Mammary epithelial cell (primary cell): ENCODE measurements at regions of chr19 and their contacts with region 1.

Region 1: GRCh38 chr19:1794424-1795172 is 17.5 kb downstream of the ATP8B3 start:
- DNase-seq: no peak
- H3K4me3 ChIP-seq: no peak overlapping the region
- H3K27ac ChIP-seq: no peak overlapping the region
- H3K4me1 ChIP-seq: peaks cover 5% of the 10 kb centered on the region
- H3K27me3 ChIP-seq: no peaks in the 10 kb centered on the region
- CTCF ChIP-seq: no peak

Region 2: DNA sequence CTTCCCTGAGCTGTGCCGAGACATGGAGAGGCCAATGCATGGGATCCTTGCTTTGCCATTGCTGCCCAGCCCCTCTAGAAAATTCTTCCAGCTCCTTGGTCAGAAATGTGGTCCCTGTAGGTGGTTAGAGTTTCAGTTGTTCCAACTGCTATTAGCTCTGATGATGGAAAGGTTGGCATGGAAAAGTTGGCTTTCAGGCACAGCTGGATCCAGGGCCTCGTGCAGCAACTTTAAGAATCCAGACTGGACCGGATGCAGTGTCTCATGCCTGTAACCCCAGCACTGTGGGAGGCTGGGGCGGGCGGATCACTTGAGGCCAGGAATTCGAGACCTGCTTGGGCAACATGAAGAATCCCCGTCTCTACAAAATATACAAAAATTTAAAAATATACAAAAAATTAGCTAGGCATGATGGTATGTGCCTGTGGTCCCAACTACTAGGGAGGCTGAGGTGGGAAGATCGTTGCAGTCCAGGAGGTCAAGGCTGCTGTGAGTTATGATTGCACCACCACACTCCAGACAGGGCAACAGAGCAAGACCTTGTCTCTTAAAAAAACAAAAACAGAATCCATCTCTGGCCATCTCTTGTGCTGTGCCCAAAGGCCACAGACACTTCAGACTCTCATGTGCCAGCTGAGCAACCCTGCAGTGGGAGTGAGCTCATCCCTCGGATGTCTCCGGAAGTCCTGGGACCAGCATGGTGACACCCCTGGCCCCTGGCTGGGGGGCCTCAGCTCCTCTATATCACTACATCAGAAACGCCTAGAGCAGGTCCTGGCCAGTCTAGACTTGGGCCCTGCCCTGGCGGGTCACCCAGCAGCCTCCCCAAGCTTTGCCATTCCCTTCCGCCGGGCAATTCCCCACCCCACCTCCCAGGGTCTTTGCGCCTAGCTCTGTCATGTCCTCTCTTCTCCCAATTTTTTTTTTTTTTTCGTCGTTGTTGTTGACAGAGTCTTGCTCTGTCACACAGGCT is 243.2 kb before region 1 on chr19:
- CTCF ChIA-PET with region 1: no interaction called
- dilution Hi-C with region 1: no loop called
- in situ Hi-C with region 1: loop called in 1 of 2 experiments (anchors 25 kb)
- intact Hi-C with region 1: loop called (anchors 5 kb)
- DNase-seq: no peak
- H3K4me3 ChIP-seq: no peak overlapping the region
- H3K27ac ChIP-seq: no peak overlapping the region
- H3K4me1 ChIP-seq: no peaks in the 10 kb centered on the region
- H3K27me3 ChIP-seq: no peaks in the 10 kb centered on the region
- CTCF ChIP-seq: no peak